Left lung (tissue), 14 donors: ENCODE measurements at regions of chr10 and their contacts with region 1.

Region 1: GRCh38 chr10:94320285-94320914 is 42.3 kb downstream of the NOC3L start:
- DNase-seq: peak in 3 of 4 donors; percentile 59 to 80 (median 65)
- ATAC-seq: peak; percentile 63
- H3K4me3 ChIP-seq: no peak overlapping the region
- H3K27ac ChIP-seq: no peak overlapping the region
- H3K4me1 ChIP-seq: no peaks in the 10 kb centered on the region
- H3K27me3 ChIP-seq: no peaks in the 10 kb centered on the region
- CTCF ChIP-seq: peak; percentile 69 to 84

Region 2: DNA sequence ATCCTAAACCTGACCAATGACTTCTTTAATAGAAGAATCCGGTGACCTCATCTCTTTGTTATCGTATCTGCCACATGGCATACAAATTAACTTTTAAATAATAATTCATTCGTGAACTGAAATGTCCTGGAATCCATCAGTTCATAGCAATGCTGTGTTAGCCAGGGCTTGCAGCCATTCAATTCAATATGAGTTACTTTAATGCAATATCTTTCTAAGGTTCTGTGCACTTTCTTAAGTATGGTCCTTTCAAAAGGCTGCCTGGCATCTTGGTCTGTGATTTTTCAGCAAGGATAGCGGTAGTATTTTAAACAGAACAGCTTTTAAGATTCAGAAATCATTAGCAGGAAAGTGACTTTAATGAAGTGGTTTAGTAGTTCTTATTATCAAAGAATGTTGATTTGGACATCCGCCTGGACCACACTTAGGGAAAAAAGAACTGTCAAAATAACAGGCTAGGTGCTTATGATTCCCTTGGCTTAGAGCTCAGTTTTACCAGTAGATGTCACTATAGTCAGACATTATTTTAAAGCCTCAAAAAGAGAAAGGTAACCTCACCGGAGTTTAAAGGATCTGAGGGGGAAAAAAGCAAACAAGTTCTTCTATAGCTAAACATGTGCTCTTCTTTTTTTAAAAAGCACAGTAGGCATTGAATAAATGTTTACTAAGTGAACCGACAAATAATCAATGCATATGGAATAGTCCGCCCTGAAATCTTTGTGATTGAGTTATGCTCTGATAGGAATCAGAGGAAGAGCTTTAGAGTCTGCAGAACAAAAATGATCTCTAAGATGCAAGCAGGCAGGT is 403.9 kb before region 1 on chr10:
- intact Hi-C with region 1: loop called in 1 of 2 experiments (anchors 10 kb)
- DNase-seq: peak in 2 of 4 donors; percentile 20 to 53
- ATAC-seq: peak; percentile 93
- H3K4me3 ChIP-seq: no peak overlapping the region
- H3K27ac ChIP-seq: no peak overlapping the region
- H3K4me1 ChIP-seq: no peaks in the 10 kb centered on the region
- H3K27me3 ChIP-seq: no peaks in the 10 kb centered on the region
- CTCF ChIP-seq: peak; percentile 42 to 53

Region 3: GRCh38 chr10:94846204-94846603 is 525.8 kb after region 1 on chr10:
- intact Hi-C with region 1: no loop called
- DNase-seq: no peak
- ATAC-seq: no peak
- H3K4me3 ChIP-seq: no peak overlapping the region
- H3K27ac ChIP-seq: no peak overlapping the region
- H3K4me1 ChIP-seq: no peaks in the 10 kb centered on the region
- H3K27me3 ChIP-seq: no peaks in the 10 kb centered on the region
- CTCF ChIP-seq: no peak